Caco-2 (cell line): ENCODE measurements at regions of chr3 and their contacts with region 1.

Region 1: GRCh38 chr3:112979240-112979832 is 4.4 kb upstream of the CD200R1 start:
- DNase-seq: peak in 1 of 2 experiments; percentile 39
- H3K4me3 ChIP-seq: no peak overlapping the region
- H3K4me3 Mint-ChIP-seq: no peak overlapping the region
- H3K27ac Mint-ChIP-seq: no peak overlapping the region
- H3K4me1 ChIP-seq: no peaks in the 10 kb centered on the region
- H3K4me1 Mint-ChIP-seq: peaks cover 6% of the 10 kb centered on the region
- H3K27me3 ChIP-seq: no peaks in the 10 kb centered on the region
- H3K27me3 Mint-ChIP-seq: no peaks in the 10 kb centered on the region
- CTCF ChIP-seq: peak; percentile 55 to 76

Region 2: GRCh38 chr3:112734718-112735350 is 244.5 kb before region 1 on chr3:
- CTCF ChIA-PET with region 1: interaction called, 15 read pairs
- POLR2A ChIA-PET with region 1: no interaction called
- intact Hi-C with region 1: loop called (anchors 1 kb)
- DNase-seq: peak; percentile 67 to 76
- H3K4me3 ChIP-seq: no peak overlapping the region
- H3K4me3 Mint-ChIP-seq: no peak overlapping the region
- H3K27ac Mint-ChIP-seq: no peak overlapping the region
- H3K4me1 ChIP-seq: peaks cover 19% of the 10 kb centered on the region
- H3K4me1 Mint-ChIP-seq: peaks cover 18% of the 10 kb centered on the region
- H3K27me3 ChIP-seq: no peaks in the 10 kb centered on the region
- H3K27me3 Mint-ChIP-seq: no peaks in the 10 kb centered on the region
- CTCF ChIP-seq: peak; percentile 63 to 81

Region 3: GRCh38 chr3:112814266-112814665 is 165.1 kb before region 1 on chr3:
- CTCF ChIA-PET with region 1: no interaction called
- POLR2A ChIA-PET with region 1: no interaction called
- intact Hi-C with region 1: loop called (anchors 5 kb)
- DNase-seq: peak in 1 of 2 experiments; percentile 12
- H3K4me3 ChIP-seq: no peak overlapping the region
- H3K4me3 Mint-ChIP-seq: no peak overlapping the region
- H3K27ac Mint-ChIP-seq: no peak overlapping the region
- H3K4me1 ChIP-seq: no peaks in the 10 kb centered on the region
- H3K4me1 Mint-ChIP-seq: no peaks in the 10 kb centered on the region
- H3K27me3 ChIP-seq: no peaks in the 10 kb centered on the region
- H3K27me3 Mint-ChIP-seq: no peaks in the 10 kb centered on the region
- CTCF ChIP-seq: peak; percentile 28 to 48